CD4-positive, alpha-beta memory T cell (primary cell): ENCODE measurements at regions of chr18 and their contacts with region 1.

Region 1: DNA sequence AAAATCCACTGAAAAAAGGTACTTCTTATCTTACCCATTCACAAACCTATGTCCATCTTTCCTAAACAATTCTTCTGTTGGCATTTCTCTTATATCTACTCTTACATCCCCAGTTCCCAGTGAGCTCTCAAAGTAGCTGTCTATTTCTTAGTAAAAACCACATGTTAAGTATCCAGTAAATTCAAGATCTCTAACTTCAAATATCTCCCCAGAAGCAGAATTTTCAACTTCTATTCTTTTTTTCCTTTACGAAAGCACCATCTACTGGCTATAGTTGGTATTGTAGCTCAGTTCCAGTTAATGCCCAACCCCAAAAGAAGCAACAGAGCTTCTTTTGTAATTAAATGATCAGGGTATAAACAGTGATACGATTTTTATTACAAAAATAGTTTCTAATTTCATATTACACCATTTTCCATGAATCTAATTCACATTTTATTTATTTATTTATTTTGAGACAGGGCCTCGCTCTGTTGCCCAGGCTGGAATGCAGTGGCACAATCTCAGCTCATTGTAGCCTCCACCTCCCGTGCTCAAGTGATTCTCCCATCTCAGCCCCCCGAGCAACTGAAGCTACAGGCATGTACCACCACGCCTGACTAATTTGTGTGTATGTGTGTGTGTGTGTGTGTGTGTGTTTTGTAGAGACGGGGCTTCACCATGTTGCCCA is 28.5 kb downstream of the HRH4 start:
- DNase-seq: peak in 4 of 5 donors; percentile 29 to 53 (median 37)
- H3K4me3 ChIP-seq: no peak overlapping the region
- H3K4me3 Mint-ChIP-seq: peak overlapping the region in 1 of 8 donors; percentile 30
- H3K27ac ChIP-seq: no peak overlapping the region
- H3K27ac Mint-ChIP-seq: peak overlapping the region in 1 of 7 donors; percentile 53
- H3K4me1 ChIP-seq: no peaks in the 10 kb centered on the region
- H3K4me1 Mint-ChIP-seq: peaks cover 12 to 23% (median 15%) of the 10 kb centered on the region in 4 donors
- H3K27me3 ChIP-seq: no peaks in the 10 kb centered on the region
- H3K27me3 Mint-ChIP-seq: peaks cover 0 to 15% of the 10 kb centered on the region in 2 donors

Region 2: GRCh38 chr18:24176727-24177416 is 312.1 kb before region 1 on chr18:
- CTCF ChIA-PET with region 1: interaction called, 48 read pairs
- POLR2A ChIA-PET with region 1: no interaction called
- intact Hi-C with region 1: loop called (anchors 1 kb)
- DNase-seq: peak in 4 of 5 donors; percentile 5 to 11 (median 7)
- H3K4me3 ChIP-seq: no peak overlapping the region
- H3K4me3 Mint-ChIP-seq: no peak overlapping the region
- H3K27ac ChIP-seq: no peak overlapping the region
- H3K27ac Mint-ChIP-seq: no peak overlapping the region
- H3K4me1 ChIP-seq: no peaks in the 10 kb centered on the region
- H3K4me1 Mint-ChIP-seq: no peaks in the 10 kb centered on the region
- H3K27me3 ChIP-seq: no peaks in the 10 kb centered on the region
- H3K27me3 Mint-ChIP-seq: peaks cover 0 to 5% of the 10 kb centered on the region in 2 donors

Region 3: DNA sequence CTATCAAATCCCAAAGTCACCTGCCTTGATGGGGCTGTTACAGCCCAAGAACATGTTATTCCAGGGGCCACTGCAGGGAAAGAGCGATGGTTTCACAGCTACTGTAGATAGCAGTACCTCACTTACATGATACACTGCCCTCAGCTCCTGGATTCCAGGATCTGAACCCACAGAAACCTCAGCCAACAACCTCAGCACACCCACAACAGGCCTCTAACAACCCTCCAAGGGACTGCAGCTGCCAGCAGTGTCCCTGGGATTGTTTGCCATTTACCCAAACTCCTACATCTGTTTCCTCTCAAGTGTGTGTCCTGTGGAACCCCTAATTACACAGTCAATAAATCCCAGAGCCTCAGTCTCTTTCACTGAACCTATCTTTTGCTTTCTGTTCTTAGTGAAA is 119.5 kb before region 1 on chr18:
- CTCF ChIA-PET with region 1: interaction called, 274 read pairs
- POLR2A ChIA-PET with region 1: no interaction called
- intact Hi-C with region 1: no loop called
- DNase-seq: no peak
- H3K4me3 ChIP-seq: no peak overlapping the region
- H3K4me3 Mint-ChIP-seq: no peak overlapping the region
- H3K27ac ChIP-seq: no peak overlapping the region
- H3K27ac Mint-ChIP-seq: peak overlapping the region in 2 of 7 donors; percentile 10 to 18
- H3K4me1 ChIP-seq: peaks cover 14% of the 10 kb centered on the region
- H3K4me1 Mint-ChIP-seq: peaks cover 9 to 23% (median 10%) of the 10 kb centered on the region in 4 donors
- H3K27me3 ChIP-seq: no peaks in the 10 kb centered on the region
- H3K27me3 Mint-ChIP-seq: no peaks in the 10 kb centered on the region

Region 4: DNA sequence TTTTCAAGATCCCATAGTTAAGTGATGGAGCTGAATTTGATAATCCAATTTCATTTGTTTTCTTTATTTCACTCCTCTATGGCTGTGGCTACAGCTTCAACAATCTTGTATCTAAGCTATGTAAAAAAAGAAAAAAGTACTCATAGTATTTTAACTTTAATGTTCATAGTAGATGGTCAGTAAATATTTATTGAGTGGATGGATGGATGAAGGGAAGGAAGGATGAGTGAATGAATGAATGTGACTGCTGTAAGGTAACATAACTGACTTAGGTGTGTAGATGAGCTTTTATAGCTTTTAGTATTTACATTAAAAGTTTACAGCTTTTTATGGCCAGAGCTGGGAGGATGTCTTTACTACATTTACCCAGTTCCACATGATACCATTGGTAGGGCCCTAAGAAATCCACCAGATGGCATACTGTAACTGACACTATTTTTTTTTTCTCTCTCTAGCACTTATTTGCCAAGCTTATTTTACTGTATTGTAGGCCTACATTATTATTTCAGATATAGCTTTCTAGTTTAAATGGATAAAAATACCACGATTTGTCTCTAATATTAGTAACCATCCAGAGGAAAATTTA is 41.9 kb before region 1 on chr18:
- CTCF ChIA-PET with region 1: interaction called, 29 read pairs
- POLR2A ChIA-PET with region 1: no interaction called
- intact Hi-C with region 1: loop called (anchors 1 kb)
- DNase-seq: no peak
- H3K4me3 ChIP-seq: no peak overlapping the region
- H3K4me3 Mint-ChIP-seq: no peak overlapping the region
- H3K27ac ChIP-seq: no peak overlapping the region
- H3K27ac Mint-ChIP-seq: no peak overlapping the region
- H3K4me1 ChIP-seq: no peaks in the 10 kb centered on the region
- H3K4me1 Mint-ChIP-seq: no peaks in the 10 kb centered on the region
- H3K27me3 ChIP-seq: no peaks in the 10 kb centered on the region
- H3K27me3 Mint-ChIP-seq: no peaks in the 10 kb centered on the region

Region 5: DNA sequence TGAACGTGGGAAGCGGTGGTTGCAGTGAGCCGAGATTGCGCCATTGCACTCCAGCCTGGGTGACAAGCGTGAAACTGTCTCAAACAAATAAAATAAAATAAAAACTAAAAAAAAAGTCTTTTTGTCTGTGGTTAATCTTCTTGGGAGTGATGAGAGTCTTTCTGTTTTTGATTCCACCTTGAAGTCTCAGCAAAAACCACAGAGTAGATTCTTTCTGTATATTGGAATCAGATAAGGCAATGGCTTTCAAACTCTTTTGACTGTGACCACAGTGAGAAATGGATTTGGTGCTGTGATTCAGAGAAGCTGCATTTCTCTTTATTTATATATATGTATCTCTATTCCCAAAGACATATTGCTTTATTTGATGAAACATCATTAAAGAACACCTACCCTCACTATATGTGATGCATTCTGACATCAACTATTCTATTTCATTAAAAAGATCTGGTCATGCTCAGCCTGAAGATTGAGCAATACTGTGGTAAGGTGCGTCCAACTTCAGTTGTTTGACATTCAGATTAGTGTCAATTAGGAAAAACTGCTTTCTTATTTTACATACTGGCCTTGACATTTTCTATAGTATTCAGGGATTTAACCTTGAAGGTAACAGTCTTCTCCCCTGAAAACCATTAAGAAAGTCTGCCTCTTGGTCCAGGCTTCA is 12.9 kb before region 1 on chr18:
- CTCF ChIA-PET with region 1: interaction called, 11 read pairs
- POLR2A ChIA-PET with region 1: no interaction called
- intact Hi-C with region 1: no loop called
- DNase-seq: peak in 4 of 5 donors; percentile 11 to 55 (median 20)
- H3K4me3 ChIP-seq: no peak overlapping the region
- H3K4me3 Mint-ChIP-seq: peak overlapping the region in 1 of 8 donors; percentile 29
- H3K27ac ChIP-seq: no peak overlapping the region
- H3K27ac Mint-ChIP-seq: peak overlapping the region in 2 of 7 donors; percentile 30 to 45
- H3K4me1 ChIP-seq: no peaks in the 10 kb centered on the region
- H3K4me1 Mint-ChIP-seq: peaks cover 7 to 15% (median 8%) of the 10 kb centered on the region in 4 donors
- H3K27me3 ChIP-seq: no peaks in the 10 kb centered on the region
- H3K27me3 Mint-ChIP-seq: peaks cover 0 to 4% of the 10 kb centered on the region in 2 donors

Region 6: GRCh38 chr18:24514439-24514838 is 25.5 kb after region 1 on chr18:
- CTCF ChIA-PET with region 1: interaction called, 16 read pairs
- POLR2A ChIA-PET with region 1: no interaction called
- intact Hi-C with region 1: no loop called
- DNase-seq: peak in 4 of 5 donors; percentile 4 to 18 (median 10)
- H3K4me3 ChIP-seq: no peak overlapping the region
- H3K4me3 Mint-ChIP-seq: no peak overlapping the region
- H3K27ac ChIP-seq: no peak overlapping the region
- H3K27ac Mint-ChIP-seq: no peak overlapping the region
- H3K4me1 ChIP-seq: no peaks in the 10 kb centered on the region
- H3K4me1 Mint-ChIP-seq: no peaks in the 10 kb centered on the region
- H3K27me3 ChIP-seq: no peaks in the 10 kb centered on the region
- H3K27me3 Mint-ChIP-seq: no peaks in the 10 kb centered on the region

Region 7: DNA sequence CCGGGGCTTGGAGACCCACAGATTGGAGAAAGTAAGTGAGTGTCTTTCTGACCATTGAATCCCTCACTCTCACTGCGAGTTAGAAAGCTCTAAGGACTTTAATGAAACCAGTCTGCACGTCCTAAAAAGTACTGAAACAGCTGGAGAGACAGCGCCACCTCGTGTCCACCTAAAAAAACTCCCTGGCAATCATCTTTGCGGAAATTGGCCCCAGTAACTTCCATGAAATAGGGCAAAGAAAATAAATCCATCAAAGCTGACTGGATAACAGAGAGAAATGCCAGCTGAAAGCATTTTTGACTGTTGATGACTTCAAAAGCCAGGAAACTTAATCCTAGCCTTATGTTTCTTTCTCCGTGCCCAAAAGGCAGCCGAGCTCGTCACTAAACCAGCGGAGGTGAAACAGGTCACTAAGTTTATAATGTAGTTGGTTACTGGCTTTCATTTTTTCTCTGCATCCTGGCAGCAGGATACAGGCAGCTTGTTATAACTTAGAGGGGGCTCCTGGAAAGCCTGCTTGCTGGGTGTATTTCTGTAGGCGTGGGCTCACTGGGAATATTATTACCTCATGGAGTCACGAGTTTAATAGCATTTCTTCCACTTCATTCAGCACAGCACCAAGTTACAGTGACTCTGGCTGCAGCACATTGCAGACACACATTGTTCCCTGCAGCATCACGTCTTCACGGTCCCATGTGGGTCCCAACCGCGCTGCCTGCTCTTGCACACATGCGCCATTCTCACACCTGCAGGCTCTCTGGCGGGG is 238.0 kb after region 1 on chr18:
- CTCF ChIA-PET with region 1: interaction called, 25 read pairs
- POLR2A ChIA-PET with region 1: no interaction called
- intact Hi-C with region 1: no loop called
- DNase-seq: peak in 4 of 5 donors; percentile 43 to 46 (median 43)
- H3K4me3 ChIP-seq: no peak overlapping the region
- H3K4me3 Mint-ChIP-seq: no peak overlapping the region
- H3K27ac ChIP-seq: no peak overlapping the region
- H3K27ac Mint-ChIP-seq: no peak overlapping the region
- H3K4me1 ChIP-seq: no peaks in the 10 kb centered on the region
- H3K4me1 Mint-ChIP-seq: peaks cover 0 to 3% (median 2%) of the 10 kb centered on the region in 4 donors
- H3K27me3 ChIP-seq: no peaks in the 10 kb centered on the region
- H3K27me3 Mint-ChIP-seq: peaks cover 6 to 11% of the 10 kb centered on the region in 2 donors